ENCODE measurements at regions of chr5 and their contacts with region 1.

Region 1: GRCh38 chr5:66814146-66814991 is 218.2 kb downstream of the MAST4 start:
- DNase-seq: peak in 7 of 9 donors; percentile 19 to 51 (median 36)
- ATAC-seq: peak; percentile 73
- H3K4me3 ChIP-seq: no peak overlapping the region
- H3K4me3 Mint-ChIP-seq: no peak overlapping the region
- H3K27ac ChIP-seq: no peak overlapping the region
- H3K27ac Mint-ChIP-seq: peak overlapping the region in 1 of 9 donors; percentile 7
- H3K4me1 ChIP-seq: peaks cover 0 to 3% of the 10 kb centered on the region in 2 donors
- H3K4me1 Mint-ChIP-seq: peaks cover 0 to 34% (median 0%) of the 10 kb centered on the region in 7 donors
- H3K27me3 ChIP-seq: no peaks in the 10 kb centered on the region
- H3K27me3 Mint-ChIP-seq: peaks cover 0 to 15% (median 5%) of the 10 kb centered on the region in 5 donors

Region 2: DNA sequence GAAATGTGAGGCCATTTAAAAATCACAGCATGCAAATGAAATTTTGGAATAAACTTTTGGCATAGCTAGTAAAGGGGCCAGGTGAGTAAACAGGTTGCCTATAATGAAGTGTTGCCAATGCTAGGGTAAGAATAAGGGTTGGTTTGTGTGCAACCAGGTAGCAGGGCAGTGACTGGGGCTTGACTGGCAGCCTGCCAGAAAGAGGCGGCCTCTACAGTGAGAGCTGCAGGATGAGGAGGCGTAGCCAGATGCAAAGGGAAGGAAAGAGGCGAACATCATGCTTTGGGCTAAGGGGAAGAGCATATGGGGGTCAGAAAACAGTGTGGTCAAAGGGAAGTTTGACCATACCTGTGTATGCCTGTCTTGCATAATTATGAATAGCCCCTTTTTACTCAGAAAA is 147.6 kb before region 1 on chr5:
- CTCF ChIA-PET with region 1: no interaction called
- POLR2A ChIA-PET with region 1: no interaction called
- intact Hi-C with region 1: no loop called
- DNase-seq: no peak
- ATAC-seq: no peak
- H3K4me3 ChIP-seq: no peak overlapping the region
- H3K4me3 Mint-ChIP-seq: no peak overlapping the region
- H3K27ac ChIP-seq: no peak overlapping the region
- H3K27ac Mint-ChIP-seq: no peak overlapping the region
- H3K4me1 ChIP-seq: no peaks in the 10 kb centered on the region
- H3K4me1 Mint-ChIP-seq: no peaks in the 10 kb centered on the region
- H3K27me3 ChIP-seq: no peaks in the 10 kb centered on the region
- H3K27me3 Mint-ChIP-seq: peaks cover 16 to 36% (median 28%) of the 10 kb centered on the region in 5 donors

Region 3: DNA sequence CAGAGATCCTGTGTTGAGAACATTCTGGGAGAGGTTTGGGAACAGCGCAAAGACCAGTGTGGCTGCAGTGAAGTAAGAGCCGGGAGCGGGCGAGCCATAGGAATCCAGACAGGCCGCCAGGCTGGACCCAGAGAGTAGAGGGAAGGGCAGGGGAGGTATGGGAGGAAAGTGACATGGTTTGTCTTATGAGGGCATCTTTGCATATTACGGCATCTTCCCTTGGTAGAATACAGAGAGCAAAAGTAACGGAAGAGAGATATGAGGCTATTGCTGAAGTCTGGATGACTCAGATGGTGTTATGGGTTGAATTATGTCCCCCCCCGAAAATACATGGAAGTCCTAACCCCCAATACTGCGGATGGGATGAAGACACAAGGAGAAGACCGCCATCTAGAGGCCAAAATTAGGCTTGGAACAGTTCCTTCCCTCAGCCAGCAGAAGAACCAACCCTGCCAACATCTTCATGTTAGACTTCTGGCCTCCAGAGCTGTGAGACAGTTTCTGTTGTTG is 50.0 kb after region 1 on chr5:
- CTCF ChIA-PET with region 1: no interaction called
- POLR2A ChIA-PET with region 1: no interaction called
- intact Hi-C with region 1: loop called (anchors 1 to 2 kb)
- DNase-seq: peak in 1 of 9 donors; percentile 12
- ATAC-seq: peak; percentile 32
- H3K4me3 ChIP-seq: no peak overlapping the region
- H3K4me3 Mint-ChIP-seq: no peak overlapping the region
- H3K27ac ChIP-seq: no peak overlapping the region
- H3K27ac Mint-ChIP-seq: peak overlapping the region in 1 of 9 donors; percentile 1
- H3K4me1 ChIP-seq: no peaks in the 10 kb centered on the region
- H3K4me1 Mint-ChIP-seq: peaks cover 0 to 50% (median 0%) of the 10 kb centered on the region in 7 donors
- H3K27me3 ChIP-seq: no peaks in the 10 kb centered on the region
- H3K27me3 Mint-ChIP-seq: peaks cover 4 to 48% (median 26%) of the 10 kb centered on the region in 5 donors

Region 4: DNA sequence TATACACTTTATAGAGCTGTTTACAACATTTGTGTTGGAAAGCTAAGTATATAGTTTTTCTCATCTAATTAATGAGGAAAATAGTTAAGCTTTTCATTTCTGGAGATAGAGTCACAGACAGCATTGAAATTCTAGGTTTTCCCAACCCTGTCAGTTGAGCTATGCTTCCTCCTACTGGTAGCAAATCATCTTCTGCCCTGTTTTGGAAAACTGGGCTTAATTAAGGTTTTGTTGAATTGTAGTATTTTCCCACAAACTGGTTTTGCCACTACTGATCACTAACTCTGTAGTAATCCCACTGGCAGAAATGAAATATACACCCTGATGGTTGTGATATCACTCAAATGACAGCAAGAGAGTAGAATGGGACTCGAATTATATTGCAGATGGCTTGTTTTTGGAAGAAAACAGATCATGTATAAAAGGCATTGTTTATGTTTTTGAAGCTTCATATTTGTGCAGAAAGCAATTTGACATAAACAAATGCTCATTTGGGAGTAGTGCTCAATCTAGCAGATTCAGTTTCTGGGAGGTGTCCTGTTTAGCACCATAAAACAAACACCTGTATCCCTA is 335.7 kb after region 1 on chr5:
- CTCF ChIA-PET with region 1: no interaction called
- POLR2A ChIA-PET with region 1: no interaction called
- intact Hi-C with region 1: loop called in 1 of 2 experiments (anchors 1 kb)
- DNase-seq: no peak
- ATAC-seq: no peak
- H3K4me3 ChIP-seq: no peak overlapping the region
- H3K4me3 Mint-ChIP-seq: no peak overlapping the region
- H3K27ac ChIP-seq: no peak overlapping the region
- H3K27ac Mint-ChIP-seq: peak overlapping the region in 1 of 9 donors; percentile 32
- H3K4me1 ChIP-seq: no peaks in the 10 kb centered on the region
- H3K4me1 Mint-ChIP-seq: peaks cover 0 to 16% (median 0%) of the 10 kb centered on the region in 7 donors
- H3K27me3 ChIP-seq: no peaks in the 10 kb centered on the region
- H3K27me3 Mint-ChIP-seq: no peaks in the 10 kb centered on the region

Measured in naive thymus-derived CD4-positive, alpha-beta T cell (primary cell).